PC-3 (cell line): ENCODE measurements at regions of chr10 and their contacts with region 1.

Region 1: GRCh38 chr10:70212879-70213278 is 20.4 kb downstream of the PPA1 start:
- DNase-seq: no peak
- ATAC-seq: no peak
- H3K4me3 ChIP-seq: no peak overlapping the region
- H3K27ac ChIP-seq: no peak overlapping the region
- H3K4me1 ChIP-seq: no peaks in the 10 kb centered on the region
- H3K27me3 ChIP-seq: no peaks in the 10 kb centered on the region
- CTCF ChIP-seq: no peak

Region 2: DNA sequence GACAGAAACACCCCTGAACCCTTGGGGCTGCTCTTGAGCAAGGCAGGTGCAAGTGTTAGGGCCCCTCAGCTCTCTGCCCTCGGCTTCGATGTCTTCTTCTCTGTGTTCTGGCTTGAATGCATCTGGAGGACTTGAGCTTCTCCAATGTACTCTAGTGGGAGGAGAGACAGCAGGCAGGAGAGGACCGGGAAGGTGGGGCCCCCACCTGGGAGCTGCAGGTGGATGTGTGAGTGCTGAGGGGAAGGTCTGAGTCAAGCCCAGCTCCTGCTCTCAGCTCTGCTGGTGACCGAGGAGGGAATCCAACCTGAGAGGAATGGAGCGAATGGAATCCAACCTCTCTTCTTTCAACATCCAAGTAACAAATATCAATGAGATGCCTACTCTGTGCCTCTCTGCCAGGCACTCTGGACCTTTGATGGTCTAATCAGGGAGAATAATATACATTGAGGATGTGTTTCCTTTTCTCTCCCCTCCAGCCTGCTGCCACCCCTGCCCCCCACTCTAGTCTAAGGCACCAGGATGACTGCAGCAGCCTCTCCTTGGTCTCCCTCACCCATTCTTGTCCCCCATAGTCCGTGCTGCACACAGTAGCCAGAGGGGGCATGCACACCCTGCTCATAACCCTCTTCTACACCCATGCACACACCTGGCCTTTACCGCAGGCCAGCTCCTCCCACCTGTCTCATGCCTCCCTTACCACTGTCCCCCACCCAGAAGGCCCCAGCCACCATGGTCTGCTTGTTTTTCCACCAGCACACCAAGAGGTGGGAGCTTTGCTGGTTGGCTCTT is 558.6 kb after region 1 on chr10:
- CTCF ChIA-PET with region 1: no interaction called
- POLR2A ChIA-PET with region 1: interaction called, 24 read pairs
- intact Hi-C with region 1: no loop called
- DNase-seq: no peak
- ATAC-seq: no peak
- H3K4me3 ChIP-seq: no peak overlapping the region
- H3K27ac ChIP-seq: no peak overlapping the region
- H3K4me1 ChIP-seq: no peaks in the 10 kb centered on the region
- H3K27me3 ChIP-seq: no peaks in the 10 kb centered on the region
- CTCF ChIP-seq: no peak